Activated T-helper 2 cell treated with anti-CD3 and anti-CD28 coated beads, Interferon-gamma antibody, Interleukin-2, Interleukin-4, amounts not matched to agents 10 μg/mL and 5 μg/mL and 100 μg/mL, durations not matched to agents 14 hours and 24 hours and 36 hours (primary cell): ENCODE measurements at regions of chr13 and their contacts with region 1.

Region 1: DNA sequence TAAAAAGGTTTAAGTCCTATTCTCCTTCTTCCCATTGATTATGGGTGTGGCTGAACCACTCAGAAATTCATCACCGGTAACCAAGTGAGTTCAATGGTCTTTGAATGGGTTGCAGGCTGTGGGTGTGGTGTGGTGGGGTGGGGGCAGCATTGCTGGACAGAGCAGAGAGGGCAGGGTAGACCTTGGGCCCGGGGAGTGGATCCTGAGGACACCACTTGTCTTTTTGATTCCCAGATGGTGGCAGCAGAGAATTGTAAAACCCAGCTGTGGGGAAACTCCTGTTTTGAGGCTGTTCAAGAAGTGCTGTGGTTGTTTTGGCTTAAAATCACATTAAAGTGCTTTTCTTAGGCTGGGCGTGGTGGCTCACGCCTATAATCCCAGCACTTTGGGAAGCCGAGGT is 45.8 kb upstream of the RGCC start:
- DNase-seq: no peak
- H3K4me3 Mint-ChIP-seq: no peak overlapping the region
- H3K27ac Mint-ChIP-seq: no peak overlapping the region
- H3K4me1 Mint-ChIP-seq: no peaks in the 10 kb centered on the region
- H3K27me3 Mint-ChIP-seq: peaks cover 22% of the 10 kb centered on the region

Region 2: DNA sequence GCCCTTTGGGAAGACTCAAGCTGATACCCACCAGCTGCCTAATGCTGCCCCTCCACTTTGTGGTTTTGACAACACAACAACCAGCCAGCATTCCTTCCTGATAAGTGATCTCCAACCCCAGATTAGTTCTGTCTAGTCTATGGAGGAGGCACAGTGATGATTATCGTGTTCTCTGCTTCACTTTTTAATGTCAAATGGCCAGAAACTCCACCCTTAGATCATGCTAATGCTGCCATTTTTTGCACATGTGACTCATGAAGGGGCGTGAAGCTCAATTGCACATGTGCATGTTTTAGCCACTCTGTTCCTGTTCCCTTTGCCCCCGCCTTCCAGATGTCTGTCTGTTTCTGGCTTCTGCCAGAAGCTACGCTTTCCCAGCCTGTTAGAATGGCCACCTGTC is 1556.3 kb before region 1 on chr13:
- intact Hi-C with region 1: no loop called
- DNase-seq: no peak
- H3K4me3 Mint-ChIP-seq: no peak overlapping the region
- H3K27ac Mint-ChIP-seq: no peak overlapping the region
- H3K4me1 Mint-ChIP-seq: peaks cover 4% of the 10 kb centered on the region
- H3K27me3 Mint-ChIP-seq: no peaks in the 10 kb centered on the region

Region 3: GRCh38 chr13:41554626-41555386 is 143.3 kb after region 1 on chr13:
- intact Hi-C with region 1: loop called (anchors 10 kb)
- DNase-seq: no peak
- H3K4me3 Mint-ChIP-seq: no peak overlapping the region
- H3K27ac Mint-ChIP-seq: no peak overlapping the region
- H3K4me1 Mint-ChIP-seq: peaks cover 9% of the 10 kb centered on the region
- H3K27me3 Mint-ChIP-seq: no peaks in the 10 kb centered on the region

Region 4: GRCh38 chr13:41652727-41653361 is 241.3 kb after region 1 on chr13:
- intact Hi-C with region 1: loop called (anchors 10 kb)
- DNase-seq: no peak
- H3K4me3 Mint-ChIP-seq: no peak overlapping the region
- H3K27ac Mint-ChIP-seq: no peak overlapping the region
- H3K4me1 Mint-ChIP-seq: peaks cover 6% of the 10 kb centered on the region
- H3K27me3 Mint-ChIP-seq: no peaks in the 10 kb centered on the region